Activated naive CD4-positive, alpha-beta T cell treated with anti-CD3 and anti-CD28 coated beads for 36 hours (primary cell): ENCODE measurements at regions of chr12 and their contacts with region 1.

Region 1: GRCh38 chr12:104930388-104931326 is 27.4 kb downstream of the SLC41A2 start:
- DNase-seq: peak; percentile 76
- H3K4me3 Mint-ChIP-seq: no peak overlapping the region
- H3K27ac Mint-ChIP-seq: peak overlapping the region; percentile 0
- H3K4me1 Mint-ChIP-seq: peaks cover 23% of the 10 kb centered on the region
- H3K27me3 Mint-ChIP-seq: no peaks in the 10 kb centered on the region

Region 2: GRCh38 chr12:104890476-104891096 is 40.1 kb before region 1 on chr12:
- CTCF ChIA-PET with region 1: no interaction called
- intact Hi-C with region 1: loop called (anchors 1 kb)
- DNase-seq: peak; percentile 10
- H3K4me3 Mint-ChIP-seq: no peak overlapping the region
- H3K27ac Mint-ChIP-seq: peak overlapping the region; percentile 68
- H3K4me1 Mint-ChIP-seq: peaks cover 13% of the 10 kb centered on the region
- H3K27me3 Mint-ChIP-seq: peaks cover 6% of the 10 kb centered on the region

Region 3: GRCh38 chr12:104958009-104958945 is 27.6 kb after region 1 on chr12 and contains the start of gene SLC41A2:
- CTCF ChIA-PET with region 1: interaction called, 6 read pairs
- intact Hi-C with region 1: loop called (anchors 1 kb)
- DNase-seq: peak; percentile 85
- H3K4me3 Mint-ChIP-seq: peak within 1 kb of the TSS; percentile 84
- H3K27ac Mint-ChIP-seq: peak within 1 kb of the TSS; percentile 72
- H3K4me1 Mint-ChIP-seq: peaks cover 19% of the 10 kb centered on the region
- H3K27me3 Mint-ChIP-seq: peaks cover 14% of the 10 kb centered on the region
- total RNA-seq, gene SLC41A2: 2.7 to 3.5 TPM

Region 4: DNA sequence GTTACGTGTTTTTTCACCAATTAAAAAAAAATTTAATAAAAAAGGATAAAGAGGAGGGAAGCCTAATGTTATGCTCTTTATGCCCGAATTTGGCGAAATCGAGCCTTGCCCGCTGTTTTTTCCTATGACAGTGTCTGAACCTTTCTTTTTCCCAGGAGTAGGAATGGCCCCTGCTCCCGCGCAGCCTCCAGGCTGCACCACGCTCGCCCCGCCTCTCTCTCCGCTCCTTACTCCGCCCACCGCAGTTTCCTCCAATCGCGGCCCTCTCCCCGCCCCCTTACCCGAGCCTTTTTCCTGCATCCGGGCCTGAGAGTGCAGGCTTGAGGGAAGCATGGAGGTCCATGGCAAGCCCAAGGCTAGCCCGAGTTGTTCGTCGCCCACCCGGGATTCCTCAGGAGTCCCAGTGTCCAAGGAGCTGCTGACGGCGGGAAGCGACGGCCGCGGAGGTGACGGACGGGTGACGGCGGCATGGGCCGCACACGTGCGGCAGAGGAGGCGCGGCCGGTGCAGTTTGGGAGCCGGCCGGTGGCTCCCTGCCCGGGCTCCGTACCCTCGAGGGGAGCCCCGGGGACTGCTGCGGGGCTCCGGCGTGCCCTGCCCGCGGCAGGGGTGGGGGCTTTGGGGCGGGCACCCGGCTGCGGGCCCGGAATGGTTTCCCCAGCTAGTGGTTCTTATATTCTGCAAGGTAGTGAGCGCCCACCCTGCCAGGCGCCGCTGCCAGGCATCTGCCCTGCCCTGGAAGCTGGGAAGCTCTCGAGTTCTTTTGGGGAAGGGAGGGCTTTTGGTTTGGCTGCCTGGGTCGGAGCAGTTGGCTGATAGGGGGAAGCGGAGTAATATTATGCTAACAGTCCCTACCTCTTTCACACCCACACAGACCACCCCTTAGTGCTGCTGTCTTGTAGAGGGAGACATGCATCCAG is 55.6 kb after region 1 on chr12 and contains the start of gene NOPCHAP1:
- CTCF ChIA-PET with region 1: no interaction called
- intact Hi-C with region 1: loop called (anchors 2 kb)
- DNase-seq: peak; percentile 91
- H3K4me3 Mint-ChIP-seq: peak within 1 kb of the TSS; percentile 86
- H3K27ac Mint-ChIP-seq: peak within 1 kb of the TSS; percentile 17
- H3K4me1 Mint-ChIP-seq: peaks cover 40% of the 10 kb centered on the region
- H3K27me3 Mint-ChIP-seq: no peaks in the 10 kb centered on the region
- total RNA-seq, gene NOPCHAP1: 30.8 to 33.4 TPM

Region 5: GRCh38 chr12:105030820-105031807 is 100.5 kb after region 1 on chr12:
- CTCF ChIA-PET with region 1: interaction called, 3 read pairs
- intact Hi-C with region 1: loop called (anchors 1 kb)
- DNase-seq: no peak
- H3K4me3 Mint-ChIP-seq: no peak overlapping the region
- H3K27ac Mint-ChIP-seq: no peak overlapping the region
- H3K4me1 Mint-ChIP-seq: peaks cover 32% of the 10 kb centered on the region
- H3K27me3 Mint-ChIP-seq: no peaks in the 10 kb centered on the region